Activated B cell treated with CpG ODN at 0.5 μM for 24 hours (primary cell): ENCODE measurements at regions of chr4 and their contacts with region 1.

Region 1: GRCh38 chr4:140373328-140374129 is at the start of gene SCOC:
- DNase-seq: peak; percentile 85
- ATAC-seq: peak; percentile 95
- H3K4me3 Mint-ChIP-seq: no peak within 1 kb of the TSS
- H3K27ac Mint-ChIP-seq: peak within 1 kb of the TSS; percentile 74
- H3K4me1 Mint-ChIP-seq: peaks cover 22% of the 10 kb centered on the region
- H3K27me3 Mint-ChIP-seq: no peaks in the 10 kb centered on the region
- CTCF ChIP-seq: no peak
- total RNA-seq, gene SCOC: 18.0 and 19.9 TPM in 2 replicates

Region 2: GRCh38 chr4:140395668-140396067 is 22.1 kb after region 1 on chr4:
- CTCF ChIA-PET with region 1: no interaction called
- POLR2A ChIA-PET with region 1: interaction called, 12 read pairs
- intact Hi-C with region 1: no loop called
- DNase-seq: no peak
- ATAC-seq: no peak
- H3K4me3 Mint-ChIP-seq: no peak overlapping the region
- H3K27ac Mint-ChIP-seq: no peak overlapping the region
- H3K4me1 Mint-ChIP-seq: no peaks in the 10 kb centered on the region
- H3K27me3 Mint-ChIP-seq: peaks cover 4% of the 10 kb centered on the region
- CTCF ChIP-seq: no peak